HAP-1 (cell line): ENCODE measurements at regions of chr6 and their contacts with region 1.

Region 1: DNA sequence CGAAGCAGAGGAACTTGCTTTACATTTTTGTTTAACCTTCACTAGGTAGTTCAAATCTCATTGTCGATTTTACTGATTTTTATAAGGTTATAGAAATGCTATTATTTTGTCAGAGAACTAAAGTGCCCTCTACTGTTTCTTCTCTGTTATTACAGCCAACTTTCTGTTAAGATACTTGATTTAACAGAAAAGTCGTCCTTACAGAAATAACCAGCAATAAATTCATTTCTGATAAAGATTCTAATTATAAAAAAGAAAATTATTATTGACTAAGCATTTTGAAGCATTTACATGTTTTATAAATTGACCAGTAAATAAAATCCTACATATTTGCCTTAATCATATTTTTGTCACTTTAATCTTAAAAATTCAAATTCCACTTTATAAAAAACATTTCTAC is 60.8 kb downstream of the OGFRL1 start:
- DNase-seq: peak in 1 of 2 experiments; percentile 32
- H3K4me3 ChIP-seq: no peak overlapping the region
- H3K4me1 ChIP-seq: peaks cover 6% of the 10 kb centered on the region
- H3K27me3 ChIP-seq: no peaks in the 10 kb centered on the region

Region 2: GRCh38 chr6:71205336-71205956 is 143.9 kb before region 1 on chr6:
- in situ Hi-C with region 1: loop called (anchors 10 kb)
- DNase-seq: peak in 1 of 2 experiments; percentile 24
- H3K4me3 ChIP-seq: no peak overlapping the region
- H3K4me1 ChIP-seq: peaks cover 29% of the 10 kb centered on the region
- H3K27me3 ChIP-seq: no peaks in the 10 kb centered on the region